Colonic mucosa (tissue), 4 donors: ENCODE measurements at regions of chr12 and their contacts with region 1.

Region 1: GRCh38 chr12:89461649-89462612 is 62.7 kb downstream of the GALNT4 start:
- DNase-seq: no peak
- H3K4me3 ChIP-seq: no peak overlapping the region
- H3K27ac ChIP-seq: no peak overlapping the region
- H3K4me1 ChIP-seq: no peaks in the 10 kb centered on the region
- H3K27me3 ChIP-seq: no peaks in the 10 kb centered on the region
- CTCF ChIP-seq: peak; percentile 48

Region 2: DNA sequence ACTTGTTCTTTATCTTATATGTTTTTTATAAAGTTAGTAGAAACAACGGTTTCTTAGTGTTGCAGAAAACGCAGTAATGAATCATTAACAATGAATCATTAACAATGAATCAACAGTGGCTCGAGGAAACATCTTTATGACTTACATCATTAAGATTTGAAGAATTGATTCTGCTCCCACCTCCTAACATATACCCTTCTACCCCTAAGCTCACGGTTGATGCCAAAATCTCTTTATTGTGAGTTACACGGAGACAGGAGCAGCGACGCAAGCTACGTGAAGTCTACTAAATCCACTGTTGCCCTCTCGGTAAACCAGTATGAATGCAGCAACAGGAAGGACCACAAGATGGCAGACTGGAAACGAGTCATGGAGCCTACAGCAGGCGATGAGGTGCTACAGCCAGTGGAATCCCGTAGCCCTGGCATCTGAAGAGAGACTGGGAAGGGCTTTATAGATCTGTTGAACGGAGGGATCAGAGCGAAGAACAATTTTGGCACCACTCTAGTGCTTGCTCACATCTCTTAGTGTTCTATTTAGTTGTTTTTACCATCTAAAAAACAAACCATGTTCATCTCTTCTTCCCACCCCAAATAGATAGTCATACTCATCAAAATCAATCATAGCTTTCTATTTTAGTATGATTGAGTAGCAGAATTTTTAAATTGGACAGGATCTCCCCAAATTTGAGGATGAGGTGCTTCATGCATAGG is 442.4 kb before region 1 on chr12:
- intact Hi-C with region 1: loop called (anchors 2 kb)
- DNase-seq: peak; percentile 92
- H3K4me3 ChIP-seq: no peak overlapping the region
- H3K27ac ChIP-seq: no peak overlapping the region
- H3K4me1 ChIP-seq: no peaks in the 10 kb centered on the region
- H3K27me3 ChIP-seq: no peaks in the 10 kb centered on the region
- CTCF ChIP-seq: peak; percentile 71

Region 3: GRCh38 chr12:89051065-89051677 is 410.8 kb before region 1 on chr12:
- intact Hi-C with region 1: loop called (anchors 2 kb)
- DNase-seq: peak; percentile 44
- H3K4me3 ChIP-seq: no peak overlapping the region
- H3K27ac ChIP-seq: no peak overlapping the region
- H3K4me1 ChIP-seq: no peaks in the 10 kb centered on the region
- H3K27me3 ChIP-seq: no peaks in the 10 kb centered on the region
- CTCF ChIP-seq: peak; percentile 95

Region 4: GRCh38 chr12:89556976-89557375 is 95.0 kb after region 1 on chr12:
- intact Hi-C with region 1: no loop called
- DNase-seq: no peak
- H3K4me3 ChIP-seq: no peak overlapping the region
- H3K27ac ChIP-seq: no peak overlapping the region
- H3K4me1 ChIP-seq: no peaks in the 10 kb centered on the region
- H3K27me3 ChIP-seq: no peaks in the 10 kb centered on the region
- CTCF ChIP-seq: no peak

Region 5: DNA sequence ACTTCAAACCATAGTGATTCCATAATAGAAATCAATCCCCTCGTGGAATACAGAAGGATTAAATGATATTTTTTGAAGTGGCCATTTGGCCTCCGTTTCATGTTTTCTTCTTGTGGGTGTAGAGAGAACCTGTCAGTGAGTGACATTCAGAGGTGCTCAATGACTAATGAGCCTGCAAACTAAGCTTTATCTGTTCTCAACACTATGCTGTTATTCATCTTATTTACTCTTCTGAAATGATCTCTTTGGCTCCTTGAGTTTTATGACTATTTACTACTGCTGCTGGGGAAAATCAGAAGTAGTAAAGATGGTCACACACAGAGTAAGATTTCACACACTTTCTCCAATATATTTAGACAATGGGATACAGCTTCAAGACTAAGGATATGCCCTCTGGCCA is 216.3 kb after region 1 on chr12:
- intact Hi-C with region 1: no loop called
- DNase-seq: no peak
- H3K4me3 ChIP-seq: no peak overlapping the region
- H3K27ac ChIP-seq: no peak overlapping the region
- H3K4me1 ChIP-seq: no peaks in the 10 kb centered on the region
- H3K27me3 ChIP-seq: no peaks in the 10 kb centered on the region
- CTCF ChIP-seq: no peak